Activated CD8-positive, alpha-beta T cell treated with anti-CD3 and anti-CD28 coated beads, Interleukin-2, amount 10 ng/mL, durations not matched to agents 7 days and 5 days (primary cell): ENCODE measurements at regions of chr22 and their contacts with region 1.

Region 1: GRCh38 chr22:40436505-40437451 is 66.4 kb downstream of the SGSM3 start:
- DNase-seq: peak; percentile 41
- ATAC-seq: peak; percentile 66
- H3K4me3 Mint-ChIP-seq: peak overlapping the region; percentile 27
- H3K27ac Mint-ChIP-seq: peak overlapping the region; percentile 81
- H3K4me1 Mint-ChIP-seq: peaks cover 54% of the 10 kb centered on the region
- H3K27me3 Mint-ChIP-seq: no peaks in the 10 kb centered on the region

Region 2: GRCh38 chr22:40326905-40327735 is 109.7 kb before region 1 on chr22:
- CTCF ChIA-PET with region 1: no interaction called
- POLR2A ChIA-PET with region 1: no interaction called
- DNase-seq: no peak
- ATAC-seq: peak; percentile 24
- H3K4me3 Mint-ChIP-seq: no peak overlapping the region
- H3K27ac Mint-ChIP-seq: peak overlapping the region; percentile 55
- H3K4me1 Mint-ChIP-seq: peaks cover 93% of the 10 kb centered on the region
- H3K27me3 Mint-ChIP-seq: no peaks in the 10 kb centered on the region

Region 3: DNA sequence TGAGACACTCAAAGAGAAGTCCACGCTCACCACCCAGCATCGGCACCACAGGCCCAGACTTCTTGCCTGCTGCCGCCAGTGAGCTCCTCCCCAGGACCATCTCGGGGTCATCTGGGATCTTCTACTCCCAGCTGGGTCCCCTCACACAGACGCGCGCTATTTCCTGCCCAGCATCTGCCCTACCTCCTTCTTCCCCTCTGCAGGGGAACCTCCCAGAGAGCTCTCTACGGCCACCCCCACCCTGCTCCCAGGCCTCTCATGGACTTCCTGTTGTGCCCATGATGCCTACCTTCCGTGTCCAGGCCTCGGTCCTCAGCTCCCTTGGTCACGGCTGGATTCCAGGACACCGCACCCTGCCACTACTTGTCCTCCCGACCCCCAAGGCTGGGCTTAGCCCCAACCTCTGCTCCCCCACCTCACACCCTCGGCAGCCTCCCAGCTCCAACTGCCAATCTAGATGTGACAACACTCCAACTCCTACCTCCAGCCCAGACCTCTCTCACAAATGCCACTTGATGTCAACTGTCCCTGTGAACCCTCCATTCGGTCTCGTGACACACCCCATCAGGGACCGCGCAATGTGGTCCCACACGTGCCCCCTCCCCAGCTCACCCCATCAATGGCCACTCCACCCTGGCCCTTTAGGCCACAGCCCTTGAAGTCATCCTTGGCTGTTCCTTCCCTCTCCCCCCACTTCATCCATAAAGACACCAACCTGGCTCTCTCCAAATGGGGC is 21.1 kb before region 1 on chr22:
- CTCF ChIA-PET with region 1: interaction called, 11 read pairs
- POLR2A ChIA-PET with region 1: no interaction called
- DNase-seq: peak; percentile 53
- ATAC-seq: peak; percentile 48
- H3K4me3 Mint-ChIP-seq: no peak overlapping the region
- H3K27ac Mint-ChIP-seq: peak overlapping the region; percentile 89
- H3K4me1 Mint-ChIP-seq: peaks cover 44% of the 10 kb centered on the region
- H3K27me3 Mint-ChIP-seq: no peaks in the 10 kb centered on the region

Region 4: GRCh38 chr22:40463017-40463631 is 26.3 kb after region 1 on chr22:
- CTCF ChIA-PET with region 1: interaction called, 48 read pairs
- POLR2A ChIA-PET with region 1: interaction called, 5 read pairs
- DNase-seq: peak; percentile 72
- ATAC-seq: peak; percentile 83
- H3K4me3 Mint-ChIP-seq: peak overlapping the region; percentile 96
- H3K27ac Mint-ChIP-seq: peak overlapping the region; percentile 97
- H3K4me1 Mint-ChIP-seq: peaks cover 39% of the 10 kb centered on the region
- H3K27me3 Mint-ChIP-seq: no peaks in the 10 kb centered on the region

Region 5: DNA sequence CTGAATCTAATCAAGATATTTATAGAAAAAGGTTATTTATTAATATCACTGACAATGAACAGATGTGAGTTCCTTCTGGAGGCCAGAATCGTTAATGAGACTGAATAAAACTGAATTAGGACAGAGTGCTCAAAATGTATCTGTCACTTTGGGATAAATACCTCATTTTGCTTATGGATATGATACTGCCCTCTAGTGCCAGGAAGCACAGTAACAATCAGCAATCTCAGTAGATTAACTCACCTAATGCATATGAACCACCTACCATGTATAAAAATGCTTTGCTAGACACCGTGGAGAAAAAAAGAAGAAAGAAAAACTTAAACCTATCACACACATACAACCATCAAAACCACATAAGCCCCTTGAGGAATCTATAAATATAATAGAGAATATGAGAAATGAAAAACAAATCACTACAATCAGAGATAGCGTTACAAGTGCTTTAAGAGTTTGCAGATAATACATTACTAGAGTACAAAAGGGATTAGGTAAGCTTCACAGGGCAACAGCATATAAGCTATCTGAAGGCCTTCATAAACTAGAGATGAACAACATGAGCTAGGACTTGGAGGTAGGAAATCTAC is 51.0 kb after region 1 on chr22:
- CTCF ChIA-PET with region 1: interaction called, 153 read pairs
- POLR2A ChIA-PET with region 1: interaction called, 3 read pairs
- DNase-seq: peak; percentile 29
- ATAC-seq: peak; percentile 62
- H3K4me3 Mint-ChIP-seq: no peak overlapping the region
- H3K27ac Mint-ChIP-seq: no peak overlapping the region
- H3K4me1 Mint-ChIP-seq: peaks cover 34% of the 10 kb centered on the region
- H3K27me3 Mint-ChIP-seq: no peaks in the 10 kb centered on the region

Region 6: GRCh38 chr22:40525249-40525884 is 88.6 kb after region 1 on chr22:
- CTCF ChIA-PET with region 1: interaction called, 30 read pairs
- POLR2A ChIA-PET with region 1: no interaction called
- DNase-seq: peak; percentile 79
- ATAC-seq: peak; percentile 82
- H3K4me3 Mint-ChIP-seq: no peak overlapping the region
- H3K27ac Mint-ChIP-seq: no peak overlapping the region
- H3K4me1 Mint-ChIP-seq: peaks cover 20% of the 10 kb centered on the region
- H3K27me3 Mint-ChIP-seq: no peaks in the 10 kb centered on the region

Region 7: DNA sequence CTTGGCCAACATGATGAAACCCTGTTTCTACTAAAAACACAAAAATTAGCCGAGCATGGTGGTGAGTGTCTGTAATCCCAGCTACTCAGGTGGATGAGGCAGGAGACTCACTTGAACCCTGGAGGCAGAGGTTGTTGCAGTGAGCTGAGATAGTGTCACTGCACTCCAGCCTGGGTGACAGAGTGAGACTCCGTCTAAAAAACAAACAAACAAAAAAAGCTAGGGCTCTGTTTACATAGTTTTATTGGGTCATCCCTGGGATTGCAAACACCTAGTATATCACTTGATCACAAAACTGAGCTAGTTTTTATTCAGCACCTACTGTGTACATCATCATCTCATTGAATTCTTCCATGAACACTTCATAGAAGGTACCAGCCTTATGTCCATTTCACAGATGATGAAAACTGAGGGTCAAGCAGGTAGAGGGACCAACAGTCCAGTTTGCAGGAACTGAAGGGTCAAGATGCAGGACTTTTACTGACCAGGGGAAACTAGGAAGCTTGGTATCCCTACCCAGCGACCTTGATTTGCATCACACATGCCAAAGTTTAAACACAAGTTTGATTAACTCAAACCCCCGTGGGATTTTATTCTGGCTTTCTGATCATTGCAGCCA is 208.9 kb after region 1 on chr22:
- CTCF ChIA-PET with region 1: interaction called, 76 read pairs
- POLR2A ChIA-PET with region 1: no interaction called
- DNase-seq: no peak
- ATAC-seq: no peak
- H3K4me3 Mint-ChIP-seq: no peak overlapping the region
- H3K27ac Mint-ChIP-seq: no peak overlapping the region
- H3K4me1 Mint-ChIP-seq: peaks cover 12% of the 10 kb centered on the region
- H3K27me3 Mint-ChIP-seq: peaks cover 2% of the 10 kb centered on the region